ENCODE measurements at regions of chr12 and their contacts with region 1.

Region 1: GRCh38 chr12:10613349-10614055 is at the start of gene MAGOHB:
- DNase-seq: peak; percentile 95 to 97
- ATAC-seq: peak; percentile 98
- total RNA-seq, gene MAGOHB: 10.4 to 13.4 TPM

Region 2: GRCh38 chr12:10182354-10183061 is 431.0 kb before region 1 on chr12:
- intact Hi-C with region 1: no loop called
- DNase-seq: no peak
- ATAC-seq: no peak

Region 3: GRCh38 chr12:10721651-10722501 is 108.4 kb after region 1 on chr12:
- intact Hi-C with region 1: loop called in 1 of 2 experiments (anchors 10 kb)
- DNase-seq: peak; percentile 86 to 94
- ATAC-seq: peak; percentile 72